B cell (primary cell): ENCODE measurements at regions of chr6 and their contacts with region 1.

Region 1: GRCh38 chr6:83067448-83068413 is at the start of gene DOP1A:
- DNase-seq: peak; percentile 97
- ATAC-seq: peak; percentile 78
- H3K4me3 ChIP-seq: peak within 1 kb of the TSS; percentile 32 to 91 (median 83)
- H3K4me3 Mint-ChIP-seq: peak within 1 kb of the TSS; percentile 98
- H3K27ac ChIP-seq: peak within 1 kb of the TSS; percentile 89 to 94
- H3K27ac Mint-ChIP-seq: peak within 1 kb of the TSS; percentile 95
- H3K4me1 ChIP-seq: peaks cover 35 to 41% of the 10 kb centered on the region in 2 donors
- H3K4me1 Mint-ChIP-seq: peaks cover 52% of the 10 kb centered on the region
- H3K27me3 ChIP-seq: no peaks in the 10 kb centered on the region
- H3K27me3 Mint-ChIP-seq: no peaks in the 10 kb centered on the region
- CTCF ChIP-seq: peak; percentile 97
- total RNA-seq, gene DOP1A: 28.3 and 37.5 TPM in 2 replicates

Region 2: GRCh38 chr6:82270881-82271645 is 796.7 kb before region 1 on chr6:
- CTCF ChIA-PET with region 1: interaction called, 21 read pairs
- POLR2A ChIA-PET with region 1: no interaction called
- intact Hi-C with region 1: no loop called
- DNase-seq: peak; percentile 37
- ATAC-seq: no peak
- H3K4me3 ChIP-seq: no peak overlapping the region
- H3K4me3 Mint-ChIP-seq: no peak overlapping the region
- H3K27ac ChIP-seq: no peak overlapping the region
- H3K27ac Mint-ChIP-seq: no peak overlapping the region
- H3K4me1 ChIP-seq: no peaks in the 10 kb centered on the region
- H3K4me1 Mint-ChIP-seq: no peaks in the 10 kb centered on the region
- H3K27me3 ChIP-seq: no peaks in the 10 kb centered on the region
- H3K27me3 Mint-ChIP-seq: peaks cover 9% of the 10 kb centered on the region
- CTCF ChIP-seq: peak; percentile 77

Region 3: GRCh38 chr6:83192871-83193746 is 125.4 kb after region 1 on chr6 and contains the starts of genes PGM3 and RWDD2A:
- CTCF ChIA-PET with region 1: interaction called, 52 read pairs
- POLR2A ChIA-PET with region 1: no interaction called
- intact Hi-C with region 1: loop called (anchors 1 kb)
- DNase-seq: peak; percentile 94
- ATAC-seq: peak; percentile 97
- H3K4me3 ChIP-seq: peak within 1 kb of the TSS; percentile 58 to 93 (median 85)
- H3K4me3 Mint-ChIP-seq: peak within 1 kb of the TSS; percentile 100
- H3K27ac ChIP-seq: peak within 1 kb of the TSS; percentile 58 to 94
- H3K27ac Mint-ChIP-seq: peak within 1 kb of the TSS; percentile 97
- H3K4me1 ChIP-seq: peaks cover 23% of the 10 kb centered on the region in 2 donors
- H3K4me1 Mint-ChIP-seq: peaks cover 39% of the 10 kb centered on the region
- H3K27me3 ChIP-seq: no peaks in the 10 kb centered on the region
- H3K27me3 Mint-ChIP-seq: no peaks in the 10 kb centered on the region
- CTCF ChIP-seq: no peak
- total RNA-seq, gene PGM3: 24.5 and 35.3 TPM in 2 replicates
- total RNA-seq, gene RWDD2A: 2.7 and 2.9 TPM in 2 replicates

Region 4: DNA sequence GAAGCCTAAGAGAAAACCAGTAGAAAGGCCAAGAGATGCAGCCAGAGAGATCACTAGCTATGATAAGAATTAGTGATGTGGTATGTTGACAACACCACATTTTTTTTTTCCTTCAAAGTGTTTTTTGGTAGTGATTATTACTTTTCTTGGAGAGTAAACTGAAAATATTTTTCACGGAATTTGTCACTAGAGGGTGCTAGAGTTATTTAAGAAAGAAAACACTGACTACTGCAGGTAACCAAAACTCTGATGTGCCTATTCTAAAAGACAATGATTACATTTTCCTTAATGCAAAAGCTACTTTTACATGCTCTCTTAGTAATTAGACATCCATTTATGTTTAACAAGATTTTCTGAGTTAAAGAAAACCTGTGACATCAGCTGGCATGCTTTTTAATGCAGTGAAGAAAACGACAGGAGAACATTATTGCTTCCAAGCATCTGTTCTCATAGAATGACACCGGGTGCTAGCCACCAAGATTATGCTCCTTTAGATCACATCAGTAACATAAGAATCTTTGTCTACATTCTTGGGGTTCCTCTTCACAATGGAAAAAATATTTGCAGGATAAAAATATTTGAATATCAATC is 154.3 kb after region 1 on chr6:
- CTCF ChIA-PET with region 1: interaction called, 16 read pairs
- POLR2A ChIA-PET with region 1: no interaction called
- intact Hi-C with region 1: no loop called
- DNase-seq: peak; percentile 40
- ATAC-seq: no peak
- H3K4me3 ChIP-seq: no peak overlapping the region
- H3K4me3 Mint-ChIP-seq: no peak overlapping the region
- H3K27ac ChIP-seq: no peak overlapping the region
- H3K27ac Mint-ChIP-seq: no peak overlapping the region
- H3K4me1 ChIP-seq: no peaks in the 10 kb centered on the region
- H3K4me1 Mint-ChIP-seq: no peaks in the 10 kb centered on the region
- H3K27me3 ChIP-seq: peaks cover 0 to 3% (median 0%) of the 10 kb centered on the region in 4 experiments
- H3K27me3 Mint-ChIP-seq: peaks cover 11% of the 10 kb centered on the region
- CTCF ChIP-seq: peak; percentile 68

Region 5: DNA sequence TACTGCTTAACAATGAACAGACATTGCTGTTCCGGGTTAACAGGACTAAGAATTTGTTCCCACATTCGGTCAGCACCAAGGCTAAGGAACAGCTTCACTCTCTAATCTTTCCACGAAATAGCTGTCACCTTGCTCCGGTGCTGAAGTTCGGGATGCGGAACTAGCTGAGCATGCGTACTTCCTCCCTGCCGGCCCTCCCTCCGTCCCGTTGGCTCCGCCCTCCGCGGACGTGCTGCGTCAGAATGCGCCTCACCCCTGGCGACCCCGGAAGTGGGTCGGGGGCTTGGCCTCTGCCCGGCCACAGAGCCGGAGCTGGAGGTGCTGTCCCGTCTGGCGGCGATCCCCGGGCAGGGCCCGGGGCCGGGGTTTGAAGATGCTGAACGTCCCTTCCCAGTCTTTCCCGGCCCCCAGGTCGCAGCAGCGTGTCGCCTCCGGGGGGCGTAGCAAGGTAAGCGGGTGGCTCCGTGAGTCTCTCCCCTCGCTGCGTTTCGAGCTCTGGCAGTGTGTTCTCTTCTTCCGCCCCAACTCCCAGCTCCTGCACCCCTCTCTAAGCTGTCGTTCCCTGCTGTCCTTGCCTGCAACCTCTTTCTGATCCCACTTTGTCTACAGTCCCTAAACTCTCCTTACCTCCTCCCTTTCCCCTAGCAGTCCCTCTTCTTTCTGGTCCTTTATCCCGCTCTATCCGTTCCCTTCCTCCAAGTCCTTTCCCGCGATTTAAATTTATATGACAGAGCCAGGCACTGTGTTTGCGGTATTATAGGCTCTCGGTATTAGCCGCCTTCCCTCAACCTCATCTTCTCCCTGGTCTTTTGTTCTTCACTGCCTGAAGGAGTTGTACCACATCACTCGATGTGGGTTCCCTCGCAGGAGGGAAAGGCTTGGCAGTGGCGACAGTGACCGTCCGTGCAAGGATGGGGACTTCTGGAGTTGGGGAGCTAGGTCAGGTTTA is 792.0 kb after region 1 on chr6 and contains the start of gene CYB5R4:
- CTCF ChIA-PET with region 1: interaction called, 7 read pairs
- POLR2A ChIA-PET with region 1: no interaction called
- intact Hi-C with region 1: loop called (anchors 2 kb)
- DNase-seq: peak; percentile 95
- ATAC-seq: peak; percentile 97
- H3K4me3 ChIP-seq: peak within 1 kb of the TSS; percentile 85 to 98 (median 94)
- H3K4me3 Mint-ChIP-seq: peak within 1 kb of the TSS; percentile 99
- H3K27ac ChIP-seq: peak within 1 kb of the TSS; percentile 83 to 87
- H3K27ac Mint-ChIP-seq: peak within 1 kb of the TSS; percentile 95
- H3K4me1 ChIP-seq: peaks cover 25% of the 10 kb centered on the region in 2 donors
- H3K4me1 Mint-ChIP-seq: peaks cover 46% of the 10 kb centered on the region
- H3K27me3 ChIP-seq: peaks cover 0 to 10% (median 7%) of the 10 kb centered on the region in 4 experiments
- H3K27me3 Mint-ChIP-seq: peaks cover 16% of the 10 kb centered on the region
- CTCF ChIP-seq: peak; percentile 47
- total RNA-seq, gene CYB5R4: 39.6 and 43.7 TPM in 2 replicates